Posterior cingulate gyrus (tissue), 11 donors: ENCODE measurements at regions of chr3 and their contacts with region 1.

Region 1: DNA sequence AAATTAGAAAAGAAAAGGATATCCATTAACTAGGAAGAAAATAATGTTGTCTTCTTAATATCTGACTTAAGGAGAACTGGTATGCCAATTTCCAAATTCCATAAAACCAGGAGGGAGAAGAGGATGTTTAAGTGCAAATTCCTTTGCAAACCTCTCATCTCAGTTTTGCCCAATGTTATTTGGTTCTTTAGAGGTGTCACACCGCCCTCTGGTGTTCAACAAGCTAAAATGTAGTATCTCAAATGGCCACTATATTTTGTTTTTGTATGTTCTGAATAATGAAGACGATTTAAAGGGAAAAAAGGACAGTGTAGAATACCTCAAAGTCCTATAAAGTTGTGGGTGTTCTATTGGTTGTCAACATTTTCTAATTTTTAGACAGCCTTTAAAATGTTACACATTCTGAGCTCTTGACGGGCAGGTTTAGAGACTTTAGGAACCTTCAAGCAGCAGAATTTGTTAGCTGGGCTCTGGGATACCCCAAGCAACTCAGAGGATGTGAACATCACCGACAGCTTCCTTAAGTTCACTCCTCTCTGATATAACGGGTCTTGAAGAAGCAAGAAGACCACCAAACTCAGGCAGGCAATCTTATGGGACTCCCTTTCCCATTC is 458.3 kb downstream of the MFSD1 start:
- DNase-seq: peak in 5 of 10 donors; percentile 18 to 51 (median 29)

Region 2: GRCh38 chr3:158845765-158846350 is 414.3 kb before region 1 on chr3:
- intact Hi-C with region 1: loop called (anchors 1 kb)
- DNase-seq: no peak

Region 3: DNA sequence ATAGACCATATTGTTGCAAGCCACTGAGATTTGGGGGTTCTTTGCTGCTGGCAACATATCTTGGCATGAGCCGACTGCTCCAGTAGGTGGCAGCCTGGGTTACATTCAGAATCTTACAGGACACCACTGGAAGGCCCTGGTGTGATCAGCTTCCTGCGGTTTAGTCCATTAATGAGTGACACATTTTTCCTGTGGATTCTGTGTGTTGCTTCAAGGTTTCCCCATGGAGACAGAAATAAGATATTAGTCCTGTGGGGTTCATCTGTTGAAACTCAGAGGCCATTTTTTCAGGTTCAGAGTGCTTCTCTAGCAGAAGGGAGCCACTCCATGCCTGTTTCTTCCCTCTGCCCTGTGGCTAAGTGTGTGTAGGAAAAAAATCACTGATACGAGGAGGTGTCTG is 342.1 kb before region 1 on chr3:
- intact Hi-C with region 1: loop called (anchors 1 kb)
- DNase-seq: peak in 8 of 10 donors; percentile 24 to 90 (median 48)

Region 4: DNA sequence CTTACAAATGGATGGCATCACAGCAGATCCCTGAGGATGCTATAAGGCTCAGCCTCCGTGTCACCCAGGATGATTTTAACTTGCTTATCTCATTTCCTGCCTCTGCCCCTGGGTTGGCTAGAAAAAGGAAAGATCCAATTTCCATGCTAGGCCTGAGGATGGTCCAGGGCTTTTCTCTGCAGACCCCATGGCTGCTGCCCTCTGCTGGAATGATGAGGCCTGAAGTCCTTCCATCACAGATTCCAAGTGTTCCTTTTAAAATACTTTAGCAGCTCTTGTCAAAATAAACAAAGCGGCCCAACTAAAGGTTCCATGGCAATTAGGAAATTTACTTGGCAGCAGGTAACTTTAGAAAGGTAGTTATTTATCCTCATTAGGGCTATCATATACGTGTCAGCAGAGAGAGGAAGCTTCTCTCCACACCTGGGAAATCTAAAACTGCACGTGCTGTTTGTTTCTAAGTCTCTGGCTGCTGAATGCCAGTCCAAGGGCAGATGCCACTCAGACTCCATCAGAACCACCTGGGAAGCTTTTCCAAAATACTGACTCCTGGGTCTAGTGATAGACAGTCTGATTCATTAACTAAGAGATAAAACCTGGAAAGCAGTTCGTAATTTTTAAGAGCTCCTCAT is 326.5 kb after region 1 on chr3:
- intact Hi-C with region 1: loop called (anchors 2 kb)
- DNase-seq: peak in 5 of 10 donors; percentile 15 to 79 (median 31)

Region 5: DNA sequence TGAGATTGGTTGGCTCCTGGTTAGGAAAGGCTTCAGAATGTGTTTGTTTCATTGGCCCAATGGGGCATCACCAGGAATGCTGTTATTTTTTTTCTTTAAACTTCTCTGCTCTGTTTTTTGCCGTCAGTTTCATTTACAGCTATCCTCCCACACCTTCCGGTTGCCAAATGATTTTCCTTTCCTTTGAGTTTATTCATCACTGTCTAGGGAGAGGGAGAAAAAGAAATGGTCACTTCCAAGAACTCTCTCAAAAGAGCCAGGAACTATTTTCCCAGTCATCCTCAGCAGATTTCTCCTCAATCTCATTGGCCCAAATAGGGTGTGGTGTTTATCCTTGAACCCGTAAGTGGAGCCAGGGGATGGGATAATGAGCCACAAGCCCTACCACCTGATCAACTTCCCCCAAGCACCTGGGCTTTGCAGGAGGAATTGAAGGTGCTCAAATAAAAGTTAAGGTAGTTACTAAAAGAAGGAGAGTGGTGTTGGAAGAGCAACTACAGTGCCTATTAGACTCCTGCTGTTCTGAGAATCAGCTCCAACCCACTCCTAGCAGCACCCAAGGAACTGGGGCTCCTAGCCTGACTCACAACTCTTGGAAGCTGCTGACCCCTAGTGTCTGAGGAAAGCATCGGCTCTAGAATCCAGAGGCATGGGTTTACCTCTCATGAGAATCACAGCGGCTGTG is 544.7 kb after region 1 on chr3:
- intact Hi-C with region 1: loop called (anchors 2 kb)
- DNase-seq: peak; percentile 49 to 95 (median 77)

Region 6: DNA sequence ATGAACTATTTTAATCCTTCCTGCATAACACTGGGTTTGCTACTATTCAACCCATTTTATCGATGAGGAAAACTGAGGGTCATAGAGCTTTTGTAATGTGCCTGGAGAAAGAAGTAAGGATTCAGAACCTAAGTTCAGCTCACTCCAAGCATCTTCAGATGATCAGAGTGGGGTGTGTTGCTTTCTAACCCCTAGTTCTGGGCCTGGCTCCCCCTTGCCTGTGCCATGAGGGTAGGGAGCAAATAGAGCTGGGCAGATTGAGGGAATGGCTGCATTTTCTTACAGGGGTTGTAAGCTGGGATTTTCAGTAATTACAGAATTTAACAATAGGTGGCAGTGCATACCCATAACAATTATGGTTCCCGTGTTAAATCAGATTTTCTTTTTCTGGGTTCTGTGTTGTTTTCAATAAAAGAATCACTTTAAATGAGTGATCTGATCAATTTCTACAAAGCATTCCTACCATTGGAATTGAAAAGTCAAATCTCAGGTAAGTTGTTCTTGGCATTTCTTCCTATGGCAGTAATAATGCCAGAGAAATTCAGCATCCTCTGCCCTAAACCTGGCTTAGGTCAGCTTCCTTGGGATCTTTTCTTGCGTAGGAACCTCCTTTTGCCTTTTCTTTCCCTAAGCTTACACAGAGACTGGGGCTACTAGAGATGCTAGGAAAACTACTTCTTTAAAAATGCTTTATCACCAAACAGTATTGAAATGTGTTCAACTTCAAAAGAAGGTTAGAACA is 624.7 kb after region 1 on chr3:
- intact Hi-C with region 1: loop called (anchors 10 kb)
- DNase-seq: no peak

Region 7: DNA sequence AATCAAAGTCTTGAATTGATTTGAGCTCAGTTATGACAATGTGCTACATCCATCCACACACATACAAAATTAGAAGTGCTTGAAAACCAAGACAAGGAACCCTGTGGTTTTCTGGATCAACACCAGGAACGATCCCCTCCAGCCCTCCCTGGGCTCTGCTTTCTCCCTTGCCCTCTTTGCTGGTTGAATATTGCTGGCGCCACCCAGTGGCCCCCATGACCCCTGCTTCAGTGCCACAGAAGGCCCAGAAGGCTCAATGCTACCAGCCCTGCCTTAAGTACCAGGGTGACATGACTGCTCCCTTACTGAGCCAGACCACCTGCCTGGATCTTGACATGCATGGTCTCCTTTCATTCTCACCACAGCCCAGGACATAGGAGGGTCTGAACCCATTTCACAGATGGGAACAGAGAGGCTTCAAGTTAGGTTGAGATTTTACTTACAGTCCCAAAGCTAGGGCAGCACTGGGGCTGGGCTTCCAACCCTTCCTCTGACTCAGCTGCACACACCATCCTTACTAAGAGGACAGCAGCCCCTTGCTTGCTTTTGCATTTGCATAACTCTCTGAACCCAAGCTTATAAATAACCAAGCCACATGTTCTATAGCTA is 743.5 kb after region 1 on chr3:
- intact Hi-C with region 1: loop called (anchors 2 kb)
- DNase-seq: peak; percentile 33 to 95 (median 71)